Vagina (tissue), 2 donors: ENCODE measurements at regions of chr11 and their contacts with region 1.

Region 1: GRCh38 chr11:47176328-47177228 is at the start of gene ARFGAP2:
- DNase-seq: peak in 1 of 2 donors; percentile 97
- H3K4me3 ChIP-seq: peak within 1 kb of the TSS; percentile 81 to 96
- H3K27ac ChIP-seq: peak within 1 kb of the TSS; percentile 98
- H3K4me1 ChIP-seq: peaks cover 53% of the 10 kb centered on the region
- H3K27me3 ChIP-seq: no peaks in the 10 kb centered on the region
- CTCF ChIP-seq: no peak
- POLR2A ChIP-seq: peak in 1 of 2 donors; percentile 18
- total RNA-seq, gene ARFGAP2: 79.3 TPM

Region 2: GRCh38 chr11:47143322-47143721 is 33.3 kb before region 1 on chr11:
- intact Hi-C with region 1: no loop called
- DNase-seq: no peak
- H3K4me3 ChIP-seq: no peak overlapping the region
- H3K27ac ChIP-seq: no peak overlapping the region
- H3K4me1 ChIP-seq: peaks cover 12% of the 10 kb centered on the region
- H3K27me3 ChIP-seq: no peaks in the 10 kb centered on the region
- CTCF ChIP-seq: no peak
- POLR2A ChIP-seq: no peak

Region 3: GRCh38 chr11:47213985-47214564 is 37.5 kb after region 1 on chr11:
- intact Hi-C with region 1: loop called (anchors 5 kb)
- DNase-seq: peak in 1 of 2 donors; percentile 96
- H3K4me3 ChIP-seq: peak overlapping the region; percentile 46 to 71
- H3K27ac ChIP-seq: peak overlapping the region; percentile 97
- H3K4me1 ChIP-seq: peaks cover 36% of the 10 kb centered on the region
- H3K27me3 ChIP-seq: no peaks in the 10 kb centered on the region
- CTCF ChIP-seq: no peak
- POLR2A ChIP-seq: peak in 1 of 2 donors; percentile 48

Region 4: DNA sequence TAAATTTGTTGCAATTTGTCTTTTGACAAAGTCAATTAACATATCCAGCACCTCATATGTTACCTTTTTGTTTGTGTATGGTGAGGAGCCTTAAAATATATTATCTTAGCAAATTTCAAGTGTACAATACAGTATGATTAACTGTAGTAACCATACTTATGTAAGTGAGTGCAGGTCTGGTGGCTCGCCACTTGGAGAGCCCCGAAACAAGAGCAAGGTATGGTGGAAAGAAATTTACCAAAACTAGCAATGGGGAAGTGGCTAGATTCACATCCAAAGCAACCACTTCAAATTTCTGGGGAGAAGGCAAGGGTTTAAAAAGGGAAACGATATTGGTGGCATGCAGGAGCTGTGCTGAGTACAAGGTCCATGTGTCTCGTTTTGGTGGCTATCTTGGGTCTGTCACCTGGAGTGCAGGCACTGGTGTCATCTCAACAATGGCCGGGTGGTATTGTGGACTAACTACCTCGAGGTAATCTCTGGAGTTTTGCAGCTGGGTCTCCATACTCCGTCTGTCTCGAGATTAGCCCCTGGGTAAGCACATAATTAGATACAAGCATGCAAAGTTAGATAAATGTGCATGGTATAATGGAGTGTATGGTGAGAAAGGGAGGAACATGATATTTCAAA is 598.8 kb after region 1 on chr11:
- intact Hi-C with region 1: no loop called
- DNase-seq: no peak
- H3K4me3 ChIP-seq: no peak overlapping the region
- H3K27ac ChIP-seq: no peak overlapping the region
- H3K4me1 ChIP-seq: no peaks in the 10 kb centered on the region
- H3K27me3 ChIP-seq: no peaks in the 10 kb centered on the region
- CTCF ChIP-seq: no peak
- POLR2A ChIP-seq: no peak